Activated CD4-positive, alpha-beta T cell treated with anti-CD3 and anti-CD28 coated beads for 36 hours (primary cell): ENCODE measurements at regions of chr14 and their contacts with region 1.

Region 1: GRCh38 chr14:35416108-35416750 is 11.7 kb upstream of the NFKBIA start:
- DNase-seq: peak; percentile 86
- ATAC-seq: peak; percentile 75
- H3K4me3 Mint-ChIP-seq: peak overlapping the region; percentile 60
- H3K27ac Mint-ChIP-seq: peak overlapping the region; percentile 94
- H3K4me1 Mint-ChIP-seq: peaks cover 53% of the 10 kb centered on the region
- H3K27me3 Mint-ChIP-seq: no peaks in the 10 kb centered on the region

Region 2: DNA sequence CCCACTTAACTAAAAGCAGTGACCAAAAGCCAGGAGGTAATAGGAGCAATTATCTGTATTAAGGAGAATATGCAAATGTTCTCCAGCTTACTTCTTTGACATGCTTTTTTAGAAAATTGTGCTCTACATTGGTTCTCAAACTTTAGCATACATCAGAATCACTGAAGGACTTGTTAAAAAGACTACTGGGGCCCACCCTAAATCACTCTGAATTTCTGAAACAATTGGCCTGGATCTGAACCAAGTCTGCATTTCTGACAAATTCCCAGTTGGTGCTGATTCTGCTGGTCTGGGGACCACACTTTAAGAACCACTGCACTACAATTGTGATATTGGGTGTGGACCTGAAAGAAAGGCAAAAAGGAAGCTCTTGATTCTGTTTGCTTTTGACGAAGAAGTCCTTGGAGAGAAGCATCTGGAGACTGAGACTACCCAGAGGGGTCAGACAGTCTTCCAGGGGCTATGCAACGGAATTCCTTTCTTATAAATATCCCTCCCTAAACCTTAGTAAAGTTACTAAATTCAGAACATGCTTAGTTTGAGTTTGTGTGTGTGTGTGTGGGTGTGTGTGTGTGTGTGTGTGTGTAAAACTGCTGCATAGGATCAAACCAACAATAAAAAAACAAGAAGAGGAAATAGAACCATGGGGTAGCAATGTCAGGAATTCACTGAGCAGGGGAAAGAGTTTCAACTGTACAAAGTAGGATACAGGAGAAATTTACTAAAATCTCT is 913.6 kb before region 1 on chr14:
- CTCF ChIA-PET with region 1: no interaction called
- POLR2A ChIA-PET with region 1: no interaction called
- intact Hi-C with region 1: no loop called
- DNase-seq: no peak
- ATAC-seq: no peak
- H3K4me3 Mint-ChIP-seq: no peak overlapping the region
- H3K27ac Mint-ChIP-seq: no peak overlapping the region
- H3K4me1 Mint-ChIP-seq: no peaks in the 10 kb centered on the region
- H3K27me3 Mint-ChIP-seq: no peaks in the 10 kb centered on the region

Region 3: GRCh38 chr14:34668111-34668510 is 748.1 kb before region 1 on chr14:
- CTCF ChIA-PET with region 1: interaction called, 6 read pairs
- POLR2A ChIA-PET with region 1: no interaction called
- intact Hi-C with region 1: loop called (anchors 1 to 5 kb)
- DNase-seq: no peak
- ATAC-seq: no peak
- H3K4me3 Mint-ChIP-seq: no peak overlapping the region
- H3K27ac Mint-ChIP-seq: no peak overlapping the region
- H3K4me1 Mint-ChIP-seq: peaks cover 6% of the 10 kb centered on the region
- H3K27me3 Mint-ChIP-seq: no peaks in the 10 kb centered on the region

Region 4: GRCh38 chr14:35046048-35046741 is 370.0 kb before region 1 on chr14 and contains the start of gene FAM177A1:
- CTCF ChIA-PET with region 1: interaction called, 3 read pairs
- POLR2A ChIA-PET with region 1: interaction called, 17 read pairs
- intact Hi-C with region 1: loop called (anchors 2 to 5 kb)
- DNase-seq: peak; percentile 100
- ATAC-seq: peak; percentile 94
- H3K4me3 Mint-ChIP-seq: peak within 1 kb of the TSS; percentile 95
- H3K27ac Mint-ChIP-seq: peak within 1 kb of the TSS; percentile 99
- H3K4me1 Mint-ChIP-seq: peaks cover 23% of the 10 kb centered on the region
- H3K27me3 Mint-ChIP-seq: no peaks in the 10 kb centered on the region
- total RNA-seq, gene FAM177A1: 35.4 to 37.2 TPM

Region 5: DNA sequence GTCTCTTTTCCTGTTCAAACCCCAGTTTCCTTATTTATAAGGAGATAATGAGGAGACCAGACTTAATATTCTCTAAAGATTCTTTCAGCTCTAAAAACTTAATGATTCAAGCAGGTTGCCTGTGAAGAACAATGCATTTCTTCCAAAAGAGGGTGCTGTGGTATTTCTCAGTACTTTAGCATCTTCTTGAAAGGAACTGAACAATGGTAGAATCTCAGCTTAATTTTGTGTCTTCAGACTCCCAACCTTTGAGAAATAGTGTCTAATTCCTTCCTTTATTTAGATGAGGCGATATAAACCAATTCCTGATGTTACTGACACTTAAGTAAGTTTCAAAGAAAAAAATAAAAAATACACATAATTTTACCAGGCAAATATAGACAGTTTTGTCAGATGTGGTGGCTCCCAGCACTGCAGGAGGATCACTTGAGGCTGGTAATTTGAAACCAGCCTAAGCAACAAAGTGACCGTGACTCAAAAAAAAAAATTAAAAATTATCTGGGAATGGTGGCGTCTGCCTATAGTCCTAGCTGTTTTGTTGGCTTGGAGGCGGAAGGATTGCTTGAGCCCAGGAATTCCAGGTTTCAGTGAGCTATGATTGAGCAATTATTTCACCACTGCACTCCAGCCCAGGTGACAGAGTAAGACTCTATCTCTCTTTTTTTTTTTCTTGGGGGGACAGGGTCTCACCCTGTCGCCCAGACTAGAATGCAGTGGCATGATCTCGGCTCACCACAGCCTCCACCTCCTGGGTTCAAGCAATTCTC is 200.9 kb before region 1 on chr14:
- CTCF ChIA-PET with region 1: interaction called, 21 read pairs
- POLR2A ChIA-PET with region 1: interaction called, 8 read pairs
- intact Hi-C with region 1: no loop called
- DNase-seq: no peak
- ATAC-seq: peak; percentile 58
- H3K4me3 Mint-ChIP-seq: no peak overlapping the region
- H3K27ac Mint-ChIP-seq: no peak overlapping the region
- H3K4me1 Mint-ChIP-seq: peaks cover 16% of the 10 kb centered on the region
- H3K27me3 Mint-ChIP-seq: no peaks in the 10 kb centered on the region

Region 6: GRCh38 chr14:35292051-35292769 is 124.0 kb before region 1 on chr14 and contains the start of gene PSMA6:
- CTCF ChIA-PET with region 1: interaction called, 11 read pairs
- POLR2A ChIA-PET with region 1: interaction called, 16 read pairs
- intact Hi-C with region 1: loop called (anchors 1 kb)
- DNase-seq: peak; percentile 100
- ATAC-seq: peak; percentile 86
- H3K4me3 Mint-ChIP-seq: peak within 1 kb of the TSS; percentile 85
- H3K27ac Mint-ChIP-seq: peak within 1 kb of the TSS; percentile 96
- H3K4me1 Mint-ChIP-seq: peaks cover 52% of the 10 kb centered on the region
- H3K27me3 Mint-ChIP-seq: no peaks in the 10 kb centered on the region
- total RNA-seq, gene PSMA6: 374 to 425 TPM

Region 7: GRCh38 chr14:35404449-35405303 is 11.6 kb before region 1 on chr14 and contains the start of gene NFKBIA:
- CTCF ChIA-PET with region 1: interaction called, 77 read pairs
- POLR2A ChIA-PET with region 1: interaction called, 210 read pairs
- intact Hi-C with region 1: loop called (anchors 1 kb)
- DNase-seq: peak; percentile 98
- ATAC-seq: peak; percentile 72
- H3K4me3 Mint-ChIP-seq: peak within 1 kb of the TSS; percentile 99
- H3K27ac Mint-ChIP-seq: peak within 1 kb of the TSS; percentile 98
- H3K4me1 Mint-ChIP-seq: peaks cover 34% of the 10 kb centered on the region
- H3K27me3 Mint-ChIP-seq: no peaks in the 10 kb centered on the region
- total RNA-seq, gene NFKBIA: 264 to 298 TPM

Region 8: DNA sequence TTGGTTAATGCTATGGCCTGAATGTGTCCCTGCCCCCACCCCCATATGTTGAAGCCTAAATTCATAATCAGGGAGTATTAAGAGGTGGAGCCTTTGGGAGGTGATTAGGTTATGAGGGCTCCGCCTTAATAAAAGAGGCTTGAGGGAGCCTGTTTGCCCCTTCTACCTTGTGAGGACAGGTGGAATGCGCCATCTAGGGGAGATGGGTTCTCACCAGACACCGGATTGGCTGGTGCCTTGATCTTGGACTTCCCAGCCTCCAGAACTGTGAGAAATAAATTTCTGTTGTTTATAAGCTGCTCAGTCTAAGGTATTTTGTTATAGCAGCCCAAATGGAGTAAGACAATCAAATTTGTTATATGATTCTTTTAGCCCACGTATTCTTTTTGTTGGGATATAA is 612.0 kb after region 1 on chr14:
- CTCF ChIA-PET with region 1: no interaction called
- POLR2A ChIA-PET with region 1: no interaction called
- intact Hi-C with region 1: no loop called
- DNase-seq: peak; percentile 30
- ATAC-seq: peak; percentile 47
- H3K4me3 Mint-ChIP-seq: no peak overlapping the region
- H3K27ac Mint-ChIP-seq: no peak overlapping the region
- H3K4me1 Mint-ChIP-seq: no peaks in the 10 kb centered on the region
- H3K27me3 Mint-ChIP-seq: peaks cover 12% of the 10 kb centered on the region